ENCODE measurements at regions of chr11 and their contacts with region 1.

Region 1: DNA sequence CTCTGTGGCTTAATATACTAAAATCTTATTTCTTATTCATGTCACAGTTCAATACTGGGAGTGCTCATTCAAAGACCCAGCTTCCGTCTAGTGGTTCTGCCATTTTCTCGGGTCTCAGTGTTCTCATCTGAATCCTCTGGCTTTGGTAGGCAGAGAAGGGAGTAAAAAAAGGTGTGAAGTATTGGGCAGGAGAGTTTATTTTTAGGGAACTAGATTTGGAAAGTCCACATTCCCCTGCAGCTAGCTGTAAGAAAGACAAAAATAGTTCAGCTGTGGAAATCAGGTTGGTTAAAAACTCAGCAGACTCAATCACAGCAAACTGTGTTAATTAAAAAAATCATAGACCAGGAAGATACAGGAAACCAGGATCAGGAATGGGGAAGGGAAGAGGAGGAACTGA is 4.1 kb upstream of the LYVE1 start:
- DNase-seq: no peak

Region 2: DNA sequence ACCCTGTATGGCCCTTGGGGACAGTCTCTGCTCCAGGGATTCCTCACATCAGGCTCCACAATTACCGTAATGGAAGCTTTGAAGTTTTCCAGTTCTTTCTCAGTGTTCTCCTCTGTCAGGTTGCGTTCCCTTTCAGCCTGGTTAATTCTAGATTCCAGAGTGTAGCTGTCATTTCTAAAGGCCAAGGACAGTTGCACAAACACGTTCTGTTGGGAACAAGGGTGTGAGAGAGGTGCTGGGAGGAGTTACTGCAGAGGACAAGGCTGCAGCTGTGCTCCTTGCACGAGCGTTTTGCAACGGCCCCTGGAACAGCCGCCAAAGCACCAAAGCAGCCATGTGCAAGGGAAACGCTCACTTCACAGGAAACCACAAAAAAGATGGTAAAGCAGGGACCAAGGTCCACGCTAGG is 31.8 kb after region 1 on chr11:
- intact Hi-C with region 1: loop called in 1 of 2 experiments (anchors 1 kb)
- DNase-seq: peak; percentile 86

Measured in posterior vena cava (tissue), 2 donors.